PC-9 (cell line): ENCODE measurements at regions of chr7 and their contacts with region 1.

Region 1: DNA sequence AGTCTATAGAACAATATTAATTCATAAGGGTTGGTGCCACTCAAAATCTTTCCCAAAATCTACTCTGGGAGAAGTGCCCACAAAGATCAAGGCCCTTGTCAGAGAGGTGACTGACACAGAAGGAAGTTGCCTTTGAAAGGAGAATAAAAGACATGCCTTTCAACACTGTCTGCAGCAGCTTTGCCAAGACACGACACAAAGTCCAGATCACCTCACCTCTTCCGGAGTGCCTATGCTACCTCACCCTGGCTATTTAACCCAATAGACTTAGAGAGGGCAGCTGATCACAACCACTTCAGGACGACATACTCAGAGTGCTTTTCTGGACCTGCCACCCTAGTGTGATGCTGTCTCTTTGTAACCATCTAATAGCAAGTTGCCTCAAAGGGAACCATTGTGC is 49.0 kb upstream of the YAE1 start:
- DNase-seq: no peak
- H3K4me3 ChIP-seq: no peak overlapping the region
- H3K27ac ChIP-seq: no peak overlapping the region
- H3K4me1 ChIP-seq: no peaks in the 10 kb centered on the region
- H3K27me3 ChIP-seq: no peaks in the 10 kb centered on the region
- CTCF ChIP-seq: no peak

Region 2: DNA sequence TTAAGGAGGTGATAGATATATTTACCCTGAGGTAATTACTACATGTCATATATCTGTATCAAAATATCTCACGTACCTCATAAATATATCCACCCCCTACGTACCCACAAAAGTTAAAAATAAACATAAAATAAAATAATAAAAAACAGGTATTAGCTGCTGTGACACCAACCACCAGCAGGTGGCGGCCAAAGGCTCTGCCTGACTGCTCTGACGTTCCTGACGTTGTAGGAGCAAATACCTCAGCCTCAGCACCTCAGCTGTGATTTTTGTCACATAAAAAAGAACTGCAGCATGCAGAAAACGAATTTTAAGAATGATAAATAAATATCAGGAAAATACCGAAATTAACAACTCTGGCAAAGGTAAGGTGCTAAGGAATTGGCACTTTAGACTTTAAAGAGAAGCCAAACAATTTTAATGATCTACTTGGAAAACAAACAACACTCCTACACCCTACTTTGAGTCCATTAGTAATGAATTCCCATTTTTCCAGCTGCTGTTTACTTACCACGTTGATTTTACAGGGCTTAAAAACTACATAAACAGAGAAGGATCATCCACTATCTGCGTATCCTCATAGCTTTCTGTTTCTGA is 1118.4 kb before region 1 on chr7:
- CTCF ChIA-PET with region 1: no interaction called
- POLR2A ChIA-PET with region 1: no interaction called
- intact Hi-C with region 1: loop called (anchors 1 kb)
- DNase-seq: peak in 1 of 2 experiments; percentile 43
- H3K4me3 ChIP-seq: no peak overlapping the region
- H3K27ac ChIP-seq: no peak overlapping the region
- H3K4me1 ChIP-seq: no peaks in the 10 kb centered on the region
- H3K27me3 ChIP-seq: peaks cover 25% of the 10 kb centered on the region
- CTCF ChIP-seq: peak; percentile 96

Region 3: DNA sequence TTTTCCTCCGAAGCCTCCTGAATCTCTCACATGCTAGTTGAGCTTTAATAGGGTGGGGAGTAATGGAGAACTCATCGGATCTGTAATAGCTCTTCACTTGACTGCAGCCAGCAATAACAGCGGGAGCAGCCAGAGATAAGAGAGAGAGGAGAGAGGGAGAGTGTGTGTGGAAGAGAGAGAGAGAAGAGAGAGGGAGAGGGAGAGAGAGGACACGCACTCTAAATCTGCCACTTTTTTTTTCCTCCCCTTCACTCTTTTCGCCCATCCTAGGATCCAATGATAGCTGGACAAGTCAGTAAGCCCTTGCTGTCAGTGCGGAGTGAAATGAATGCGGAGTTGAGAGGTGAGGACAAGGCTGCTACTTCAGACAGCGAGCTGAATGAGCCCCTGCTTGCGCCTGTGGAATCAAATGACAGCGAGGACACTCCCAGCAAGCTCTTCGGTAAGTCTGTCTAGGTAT is 431.6 kb before region 1 on chr7:
- CTCF ChIA-PET with region 1: no interaction called
- POLR2A ChIA-PET with region 1: no interaction called
- intact Hi-C with region 1: no loop called
- DNase-seq: no peak
- H3K4me3 ChIP-seq: no peak overlapping the region
- H3K27ac ChIP-seq: no peak overlapping the region
- H3K4me1 ChIP-seq: no peaks in the 10 kb centered on the region
- H3K27me3 ChIP-seq: peaks cover 68% of the 10 kb centered on the region
- CTCF ChIP-seq: no peak

Region 4: DNA sequence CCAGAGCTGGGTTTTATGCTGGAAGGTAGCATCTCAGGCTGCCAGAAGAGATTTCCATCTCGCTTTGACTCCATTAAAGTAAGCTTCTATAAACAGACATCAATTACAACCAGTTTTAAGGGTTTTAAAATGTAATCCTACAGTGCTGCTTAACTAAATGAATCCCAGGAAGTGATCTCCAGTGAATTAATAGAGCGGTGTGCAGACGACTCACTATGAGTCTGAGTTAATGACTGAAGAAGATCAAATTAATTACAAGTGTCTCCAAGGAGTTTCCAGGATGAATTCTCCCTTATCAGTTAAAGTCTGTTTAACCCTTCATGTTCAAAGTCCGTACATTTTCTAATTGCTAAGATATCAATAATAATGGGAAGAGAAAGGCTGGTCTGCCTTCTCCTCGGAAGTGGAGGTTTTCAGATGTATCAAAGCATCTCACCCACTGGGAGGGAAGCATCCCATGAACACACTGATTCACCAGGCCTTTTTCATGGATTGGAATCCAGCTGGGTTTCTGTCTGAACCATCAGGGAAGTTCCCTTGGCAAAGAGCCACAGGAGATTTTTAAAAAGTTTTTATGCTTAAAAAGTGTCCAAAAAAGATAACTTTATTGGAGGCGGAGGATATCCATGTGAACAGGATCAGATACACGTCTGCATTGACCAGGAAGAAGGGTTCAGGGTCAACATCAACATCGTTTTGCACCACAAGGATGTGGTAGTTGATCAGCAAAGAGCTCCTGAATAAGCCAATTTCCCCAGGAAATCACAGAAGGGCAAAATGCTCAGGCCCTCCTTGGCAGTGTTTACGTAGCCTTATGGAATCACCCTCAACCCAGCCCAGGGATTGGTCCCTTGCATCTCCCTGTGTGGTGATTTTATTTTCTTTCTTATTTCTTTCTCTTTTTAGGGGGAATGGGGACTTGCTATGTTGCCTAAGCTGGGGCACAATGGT is 251.3 kb before region 1 on chr7:
- CTCF ChIA-PET with region 1: interaction called, 10 read pairs
- POLR2A ChIA-PET with region 1: no interaction called
- intact Hi-C with region 1: no loop called
- DNase-seq: no peak
- H3K4me3 ChIP-seq: no peak overlapping the region
- H3K27ac ChIP-seq: no peak overlapping the region
- H3K4me1 ChIP-seq: no peaks in the 10 kb centered on the region
- H3K27me3 ChIP-seq: peaks cover 47% of the 10 kb centered on the region
- CTCF ChIP-seq: no peak

Region 5: GRCh38 chr7:39349452-39350123 is 167.7 kb before region 1 on chr7:
- CTCF ChIA-PET with region 1: interaction called, 16 read pairs
- POLR2A ChIA-PET with region 1: no interaction called
- intact Hi-C with region 1: no loop called
- DNase-seq: no peak
- H3K4me3 ChIP-seq: no peak overlapping the region
- H3K27ac ChIP-seq: no peak overlapping the region
- H3K4me1 ChIP-seq: no peaks in the 10 kb centered on the region
- H3K27me3 ChIP-seq: peaks cover 52% of the 10 kb centered on the region
- CTCF ChIP-seq: no peak

Region 6: GRCh38 chr7:39446546-39446945 is 70.7 kb before region 1 on chr7:
- CTCF ChIA-PET with region 1: interaction called, 17 read pairs
- POLR2A ChIA-PET with region 1: no interaction called
- intact Hi-C with region 1: no loop called
- DNase-seq: peak in 1 of 2 experiments; percentile 8
- H3K4me3 ChIP-seq: no peak overlapping the region
- H3K27ac ChIP-seq: no peak overlapping the region
- H3K4me1 ChIP-seq: no peaks in the 10 kb centered on the region
- H3K27me3 ChIP-seq: peaks cover 96% of the 10 kb centered on the region
- CTCF ChIP-seq: no peak